SK-N-SH (cell line): ENCODE measurements at regions of chr1 and their contacts with region 1.

Region 1: GRCh38 chr1:231757101-231757404 is 130.5 kb downstream of the DISC1 start:
- DNase-seq: no peak
- H3K4me3 ChIP-seq: no peak overlapping the region
- H3K27ac ChIP-seq: no peak overlapping the region
- H3K4me1 ChIP-seq: no peaks in the 10 kb centered on the region
- H3K27me3 ChIP-seq: no peaks in the 10 kb centered on the region
- CTCF ChIP-seq: no peak; the same call in 1 of the 2 replicates
- EP300 ChIP-seq: no peak
- RAD21 ChIP-seq: no peak

Region 2: GRCh38 chr1:231720652-231721325 is 36.3 kb before region 1 on chr1:
- CTCF ChIA-PET with region 1: interaction called, 12 read pairs
- POLR2A ChIA-PET with region 1: no interaction called
- DNase-seq: no peak
- H3K4me3 ChIP-seq: no peak overlapping the region
- H3K27ac ChIP-seq: no peak overlapping the region
- H3K4me1 ChIP-seq: peaks cover 0 to 7% of the 10 kb centered on the region in 2 experiments; a peak in 1 of 4 replicates
- H3K27me3 ChIP-seq: no peaks in the 10 kb centered on the region
- CTCF ChIP-seq: no peak
- EP300 ChIP-seq: no peak
- RAD21 ChIP-seq: no peak

Region 3: GRCh38 chr1:231738554-231738953 is 18.5 kb before region 1 on chr1:
- CTCF ChIA-PET with region 1: interaction called, 13 read pairs
- POLR2A ChIA-PET with region 1: no interaction called
- DNase-seq: no peak
- H3K4me3 ChIP-seq: no peak overlapping the region
- H3K27ac ChIP-seq: no peak overlapping the region
- H3K4me1 ChIP-seq: no peaks in the 10 kb centered on the region; a peak in 1 of 4 replicates
- H3K27me3 ChIP-seq: no peaks in the 10 kb centered on the region
- CTCF ChIP-seq: no peak
- EP300 ChIP-seq: no peak
- RAD21 ChIP-seq: no peak

Region 4: GRCh38 chr1:231768416-231768815 is 11.4 kb after region 1 on chr1:
- CTCF ChIA-PET with region 1: interaction called, 46 read pairs
- POLR2A ChIA-PET with region 1: no interaction called
- DNase-seq: no peak
- H3K4me3 ChIP-seq: no peak overlapping the region
- H3K27ac ChIP-seq: no peak overlapping the region
- H3K4me1 ChIP-seq: peaks cover 0 to 2% of the 10 kb centered on the region in 2 experiments; a peak in 1 of 4 replicates
- H3K27me3 ChIP-seq: no peaks in the 10 kb centered on the region
- CTCF ChIP-seq: no peak
- EP300 ChIP-seq: no peak
- RAD21 ChIP-seq: no peak

Region 5: DNA sequence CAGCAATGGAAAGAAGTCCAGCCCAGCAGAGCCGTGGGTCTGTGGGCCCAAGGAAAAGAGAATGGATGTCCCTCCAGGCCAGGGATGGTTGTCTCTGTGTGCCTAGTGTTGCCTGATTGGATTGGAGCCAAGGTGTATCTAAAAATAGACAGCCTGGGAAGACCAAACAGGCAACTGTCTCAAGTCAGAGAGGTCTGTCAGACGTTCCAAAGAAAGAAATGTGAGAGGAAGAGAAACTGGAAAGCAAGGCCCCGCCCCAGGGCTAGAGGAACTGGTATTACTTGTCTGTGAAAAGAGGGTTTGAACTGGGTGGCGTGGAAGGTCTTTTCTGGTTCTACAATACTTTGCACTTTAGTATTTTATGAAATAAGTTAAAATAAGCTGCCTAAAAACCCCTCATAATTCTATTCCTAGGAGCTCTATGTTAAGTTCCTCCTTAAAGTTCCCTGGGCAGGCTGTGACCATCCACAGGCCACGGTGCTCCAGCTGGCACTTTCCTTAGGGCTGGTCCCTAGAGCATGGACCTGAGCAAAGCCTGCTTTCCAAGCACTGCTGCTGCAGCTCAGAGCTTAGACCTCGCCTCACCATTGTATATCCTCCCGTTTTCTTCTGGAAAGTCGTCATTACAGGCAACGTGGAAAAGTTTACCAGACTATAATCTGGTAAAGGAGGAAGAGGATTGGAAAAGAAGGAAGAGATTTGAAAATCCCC is 21.1 kb after region 1 on chr1:
- CTCF ChIA-PET with region 1: interaction called, 17 read pairs
- POLR2A ChIA-PET with region 1: interaction called, 3 read pairs
- DNase-seq: no peak
- H3K4me3 ChIP-seq: no peak overlapping the region
- H3K27ac ChIP-seq: no peak overlapping the region
- H3K4me1 ChIP-seq: peaks cover 0 to 4% of the 10 kb centered on the region in 2 experiments; a peak in 2 of 4 replicates
- H3K27me3 ChIP-seq: no peaks in the 10 kb centered on the region
- CTCF ChIP-seq: no peak
- EP300 ChIP-seq: no peak
- RAD21 ChIP-seq: no peak

Region 6: DNA sequence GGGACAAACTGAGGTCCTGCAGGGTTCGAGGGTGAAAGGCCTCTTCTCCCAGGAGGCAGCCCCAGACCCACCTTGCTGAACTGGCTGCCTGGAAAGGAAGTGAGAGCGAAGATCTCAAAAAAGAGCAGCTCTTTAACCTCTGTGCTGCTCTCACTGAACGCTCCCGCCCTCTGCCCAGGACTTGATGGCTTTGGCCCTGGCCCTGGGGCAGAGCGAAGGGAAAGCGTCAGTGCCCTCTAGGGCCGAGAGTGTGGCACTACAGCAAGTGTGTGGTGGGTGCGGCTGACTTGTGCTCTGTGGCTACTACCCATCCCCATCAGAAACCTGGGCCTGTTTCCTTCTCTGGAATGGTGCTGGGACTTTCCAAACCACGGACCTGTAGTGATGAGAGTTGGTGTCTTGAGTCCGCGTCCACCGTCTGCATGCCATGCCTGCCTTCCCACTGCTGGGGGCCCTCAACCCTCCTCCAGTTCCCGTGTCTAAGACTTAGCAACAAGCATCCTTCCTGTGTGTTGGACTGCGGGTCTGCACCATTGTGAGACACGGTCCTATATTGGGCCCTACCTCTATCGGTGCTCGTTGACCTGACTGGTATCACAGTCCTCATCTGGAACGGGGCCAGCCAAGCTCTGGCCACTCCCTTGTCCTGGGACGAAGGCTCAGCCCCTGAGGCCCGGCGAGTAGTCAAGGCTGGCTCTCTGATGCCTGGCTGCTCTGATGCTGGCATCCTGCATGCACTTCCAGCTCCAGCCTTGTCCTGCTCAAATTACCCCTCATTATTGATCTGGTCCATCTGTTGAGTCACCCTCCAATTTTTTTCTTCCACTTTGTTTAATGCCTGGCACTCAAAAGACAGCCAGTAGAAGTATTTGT is 49.8 kb after region 1 on chr1:
- CTCF ChIA-PET with region 1: interaction called, 23 read pairs
- POLR2A ChIA-PET with region 1: no interaction called
- DNase-seq: peak; percentile 58
- H3K4me3 ChIP-seq: no peak overlapping the region
- H3K27ac ChIP-seq: no peak overlapping the region
- H3K4me1 ChIP-seq: peaks cover 0 to 9% of the 10 kb centered on the region in 2 experiments; a peak in 2 of 4 replicates
- H3K27me3 ChIP-seq: no peaks in the 10 kb centered on the region
- CTCF ChIP-seq: peak; percentile 49
- EP300 ChIP-seq: no peak
- RAD21 ChIP-seq: peak; percentile 70

Region 7: GRCh38 chr1:232630047-232630893 is 873.2 kb after region 1 on chr1 and contains the start of gene SIPA1L2:
- CTCF ChIA-PET with region 1: interaction called, 18 read pairs
- POLR2A ChIA-PET with region 1: no interaction called
- DNase-seq: peak; percentile 100
- H3K4me3 ChIP-seq: peak within 1 kb of the TSS; percentile 68
- H3K27ac ChIP-seq: peak within 1 kb of the TSS in 1 of 2 experiments; percentile 58; a peak in 2 of 4 replicates
- H3K4me1 ChIP-seq: peaks cover 0 to 8% of the 10 kb centered on the region in 2 experiments; a peak in 2 of 4 replicates
- H3K27me3 ChIP-seq: peaks cover 9% of the 10 kb centered on the region; the same call in 1 of the 2 replicates
- CTCF ChIP-seq: peak; percentile 47
- EP300 ChIP-seq: no peak
- RAD21 ChIP-seq: peak; percentile 77
- polyA plus RNA-seq, gene SIPA1L2: 0.48 and 0.55 TPM in 2 replicates